K562 (cell line): ENCODE measurements at regions of chr1 and their contacts with region 1.

Region 1: DNA sequence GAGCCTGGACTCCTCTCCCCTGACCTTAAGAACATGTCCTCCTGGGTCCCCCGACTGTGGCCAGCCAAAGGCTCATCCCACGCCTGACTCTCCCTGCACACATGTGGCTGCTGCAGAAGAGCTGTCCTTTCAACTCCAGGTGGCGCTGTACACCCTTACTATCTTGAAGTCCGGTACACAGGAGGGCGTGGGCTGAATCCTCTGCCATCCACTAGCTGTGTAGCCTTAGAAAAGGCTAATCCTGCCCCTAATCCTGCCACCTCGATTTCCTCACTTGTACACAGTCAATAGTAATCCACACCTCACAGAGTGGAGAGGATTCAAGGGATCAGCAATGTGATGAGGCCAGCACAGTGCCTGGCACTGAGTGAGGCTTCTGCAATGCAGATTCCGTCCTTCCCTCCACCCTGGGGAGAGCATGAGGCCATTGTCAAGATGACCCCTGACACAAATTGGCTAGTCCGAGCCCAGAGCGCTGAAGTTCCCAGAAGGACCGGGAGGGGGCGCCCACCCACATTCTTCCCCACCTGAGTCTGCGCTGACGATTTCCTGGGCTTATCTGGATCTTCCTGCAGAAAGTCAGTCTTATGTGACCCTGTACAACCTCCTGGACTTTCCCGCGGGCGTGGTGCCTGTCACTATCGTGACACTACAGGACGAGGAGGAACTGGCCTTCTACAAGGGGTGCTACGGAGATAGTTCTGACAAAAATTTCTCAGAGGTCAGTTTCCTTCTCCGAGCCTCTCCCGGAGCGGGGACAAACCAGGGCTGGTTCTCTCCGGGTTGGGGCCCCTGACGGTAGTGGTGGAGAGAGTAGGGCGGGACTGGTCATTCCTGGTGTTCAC is 47.1 kb upstream of the DMBX1 start:
- DNase-seq: peak; percentile 93 to 98 (median 94)
- ATAC-seq: peak; percentile 93
- H3K4me3 ChIP-seq: peak overlapping the region; percentile 28
- H3K27ac ChIP-seq: peak overlapping the region; percentile 82
- H3K4me1 ChIP-seq: peaks cover 23 to 32% of the 10 kb centered on the region in 2 experiments
- H3K27me3 ChIP-seq: no peaks in the 10 kb centered on the region
- CTCF ChIP-seq: peak; percentile 92 to 99 (median 97)
- EP300 ChIP-seq: peak; percentile 86
- POLR2A ChIP-seq: peak; percentile 37; the same call in 1 of the 2 replicates
- RAD21 ChIP-seq: peak; percentile 66 to 79

Region 2: DNA sequence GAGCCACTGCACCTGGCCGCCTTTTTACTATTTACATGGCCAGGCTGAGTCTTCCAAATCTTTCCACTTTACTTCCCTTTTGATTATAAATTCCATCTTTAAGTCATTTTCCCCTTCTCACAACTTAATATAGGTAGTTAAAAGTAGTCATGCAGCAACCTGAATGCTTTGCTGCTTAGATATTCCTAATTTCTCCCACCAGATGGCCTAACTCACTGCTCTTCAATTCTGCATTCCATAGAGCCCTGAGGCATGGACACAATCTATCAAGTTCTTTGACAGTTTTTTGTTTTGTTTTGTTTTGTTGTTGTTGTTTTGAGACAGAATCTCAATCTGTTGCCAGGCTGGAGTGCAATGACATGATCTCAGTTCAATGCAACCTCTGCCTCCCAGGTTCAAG is 70.1 kb before region 1 on chr1:
- CTCF ChIA-PET with region 1: no interaction called
- POLR2A ChIA-PET with region 1: no interaction called
- in situ Hi-C with region 1: no loop called
- intact Hi-C with region 1: no loop called
- DNase-seq: no peak
- ATAC-seq: no peak
- H3K4me3 ChIP-seq: no peak overlapping the region
- H3K27ac ChIP-seq: no peak overlapping the region
- H3K4me1 ChIP-seq: peaks cover 3 to 22% of the 10 kb centered on the region in 2 experiments; a peak in 3 of 5 replicates
- H3K27me3 ChIP-seq: no peaks in the 10 kb centered on the region
- CTCF ChIP-seq: peak in 1 of 3 experiments; percentile 9; a peak in 1 of 6 replicates
- EP300 ChIP-seq: no peak
- POLR2A ChIP-seq: no peak
- RAD21 ChIP-seq: no peak

Region 3: DNA sequence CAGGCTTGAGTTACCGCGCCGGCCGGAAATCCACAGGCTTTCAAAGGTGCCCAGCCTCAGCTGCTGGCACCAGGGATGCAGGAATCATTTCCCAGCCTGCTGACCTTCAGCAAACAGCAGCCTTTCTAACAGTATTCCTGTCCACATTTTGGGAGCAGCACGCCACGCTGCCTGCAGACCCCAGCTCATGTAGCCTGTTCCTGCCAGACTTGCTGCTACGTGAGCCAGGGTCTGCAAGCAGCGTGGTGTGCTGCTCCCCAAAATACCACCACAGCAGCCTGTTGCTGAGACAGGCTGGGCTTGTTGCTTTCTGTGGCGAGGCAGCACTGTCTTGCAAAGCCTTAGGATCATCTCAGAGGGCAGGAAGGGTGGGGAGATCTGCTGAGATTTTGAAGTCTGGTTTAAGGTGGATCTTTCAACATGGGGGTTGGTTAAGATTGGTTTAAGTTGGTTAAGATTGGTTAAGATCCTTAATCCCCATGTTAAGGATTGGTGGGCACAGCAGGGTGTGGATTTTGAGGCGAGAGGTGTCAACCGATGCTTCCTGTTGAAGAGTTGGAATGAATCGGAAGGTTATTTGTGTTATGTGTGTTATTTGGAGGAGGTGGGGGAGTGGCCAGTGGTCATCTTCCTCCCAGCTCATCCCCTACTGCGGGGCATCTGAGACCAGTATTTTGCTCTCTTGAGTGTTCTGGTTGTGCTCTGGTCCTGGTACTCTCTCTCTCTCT is 35.5 kb before region 1 on chr1:
- CTCF ChIA-PET with region 1: interaction called, 4 read pairs
- POLR2A ChIA-PET with region 1: interaction called, 3 read pairs
- in situ Hi-C with region 1: no loop called
- intact Hi-C with region 1: loop called (anchors 1 kb)
- DNase-seq: no peak
- ATAC-seq: no peak
- H3K4me3 ChIP-seq: no peak overlapping the region
- H3K27ac ChIP-seq: no peak overlapping the region
- H3K4me1 ChIP-seq: peaks cover 24 to 51% of the 10 kb centered on the region in 2 experiments; a peak in 4 of 5 replicates
- H3K27me3 ChIP-seq: no peaks in the 10 kb centered on the region
- CTCF ChIP-seq: no peak
- EP300 ChIP-seq: no peak
- POLR2A ChIP-seq: no peak
- RAD21 ChIP-seq: no peak

Region 4: DNA sequence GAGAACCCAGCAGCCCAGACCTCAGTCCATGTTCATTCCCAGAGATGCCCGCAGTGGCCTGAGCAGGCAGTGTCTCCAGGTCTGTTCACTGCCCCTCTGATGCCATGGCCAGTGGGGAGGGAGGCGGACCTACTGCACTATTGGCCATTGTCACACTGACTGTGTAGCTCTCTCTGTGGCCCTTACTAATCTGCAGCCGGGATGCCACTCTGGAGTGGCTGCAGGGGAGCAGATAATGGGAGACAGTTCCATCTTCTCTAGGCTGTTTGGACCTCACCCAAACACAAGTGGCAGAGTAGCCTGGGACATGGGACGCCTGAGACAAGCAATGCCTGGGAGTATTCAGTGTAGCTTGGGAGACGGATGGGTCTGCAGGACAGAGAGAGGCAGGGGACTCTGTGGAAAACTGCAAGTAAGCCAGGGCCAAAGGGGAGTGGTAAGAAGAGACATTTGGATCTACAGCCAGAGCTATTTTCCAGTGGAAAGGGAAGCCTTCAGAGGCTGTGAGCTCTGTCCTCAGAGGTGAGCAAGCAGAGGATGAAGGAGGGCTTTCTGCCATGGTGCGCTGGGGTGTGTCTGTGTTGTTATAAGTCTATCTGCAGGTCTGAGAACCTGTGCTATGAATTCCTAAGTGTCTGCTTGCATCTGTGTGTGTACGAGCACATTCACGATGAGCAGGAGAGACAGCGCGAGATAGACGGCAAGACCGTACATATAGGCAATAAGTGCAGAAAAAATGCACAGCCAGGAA is 73.8 kb after region 1 on chr1:
- CTCF ChIA-PET with region 1: no interaction called
- POLR2A ChIA-PET with region 1: no interaction called
- in situ Hi-C with region 1: no loop called
- intact Hi-C with region 1: no loop called
- DNase-seq: no peak
- ATAC-seq: peak; percentile 1; the same call in 1 of the 3 replicates
- H3K4me3 ChIP-seq: no peak overlapping the region
- H3K27ac ChIP-seq: no peak overlapping the region
- H3K4me1 ChIP-seq: peaks cover 50 to 71% of the 10 kb centered on the region in 2 experiments
- H3K27me3 ChIP-seq: no peaks in the 10 kb centered on the region
- CTCF ChIP-seq: no peak
- EP300 ChIP-seq: no peak
- POLR2A ChIP-seq: no peak
- RAD21 ChIP-seq: no peak

Region 5: GRCh38 chr1:46527474-46528296 is 85.1 kb after region 1 on chr1:
- CTCF ChIA-PET with region 1: interaction called, 144 read pairs
- POLR2A ChIA-PET with region 1: interaction called, 7 read pairs
- in situ Hi-C with region 1: loop called (anchors 5 kb)
- intact Hi-C with region 1: loop called (anchors 1 kb)
- DNase-seq: peak; percentile 87 to 94 (median 89)
- ATAC-seq: peak; percentile 87
- H3K4me3 ChIP-seq: no peak overlapping the region
- H3K27ac ChIP-seq: no peak overlapping the region; the same call in 2 of the 3 replicates
- H3K4me1 ChIP-seq: peaks cover 47 to 50% of the 10 kb centered on the region in 2 experiments
- H3K27me3 ChIP-seq: no peaks in the 10 kb centered on the region
- CTCF ChIP-seq: peak; percentile 98 to 99 (median 99)
- EP300 ChIP-seq: peak; percentile 50; the same call in 1 of the 2 replicates
- POLR2A ChIP-seq: no peak
- RAD21 ChIP-seq: peak; percentile 100

Region 6: DNA sequence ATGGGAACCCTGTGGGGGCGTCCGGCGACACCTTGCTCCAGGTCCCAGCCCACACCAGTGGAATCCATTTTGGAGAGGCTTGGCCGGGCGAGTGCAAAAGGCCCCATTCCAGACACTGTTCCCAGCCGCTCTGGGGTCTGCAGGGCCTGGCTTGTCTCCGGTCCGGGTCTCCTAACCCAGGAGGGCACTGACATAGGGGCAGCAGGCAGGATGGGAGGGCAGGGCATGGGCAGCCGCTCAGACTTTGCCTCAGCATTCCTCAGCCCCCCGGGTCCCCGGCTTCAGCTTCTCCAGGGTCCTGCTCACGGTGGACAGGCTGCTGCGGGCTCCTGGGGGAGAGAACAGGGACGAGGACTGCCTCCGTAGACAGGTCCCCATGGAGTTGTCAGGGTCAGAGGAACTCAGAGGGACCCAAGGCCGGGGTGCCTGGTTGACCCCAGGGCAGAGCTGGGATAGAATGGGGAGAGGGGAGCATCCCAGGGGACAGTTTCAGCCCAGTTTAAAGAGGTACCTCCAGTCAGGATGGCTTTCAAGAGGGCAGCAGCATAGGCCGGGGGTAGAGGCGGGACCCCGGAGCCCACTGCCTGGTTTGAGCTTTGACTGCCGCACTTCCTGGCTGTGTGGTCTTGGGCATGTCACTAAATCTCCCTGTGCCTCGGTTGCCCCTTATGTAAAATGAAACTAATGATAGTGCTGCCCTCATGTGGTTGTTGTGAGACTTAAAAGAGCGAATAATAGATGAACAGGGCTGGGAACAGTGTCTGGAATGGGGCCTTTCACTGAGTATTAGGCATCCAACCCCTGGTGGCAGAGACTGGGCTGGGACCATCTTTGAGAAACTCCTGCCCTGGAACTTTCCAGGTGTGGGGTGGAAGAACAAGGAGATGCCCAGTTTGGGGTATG is 105.2 kb after region 1 on chr1:
- CTCF ChIA-PET with region 1: interaction called, 9 read pairs
- POLR2A ChIA-PET with region 1: interaction called, 3 read pairs
- in situ Hi-C with region 1: no loop called
- intact Hi-C with region 1: loop called (anchors 1 kb)
- DNase-seq: peak; percentile 48 to 84 (median 52)
- ATAC-seq: peak; percentile 63
- H3K4me3 ChIP-seq: no peak overlapping the region
- H3K27ac ChIP-seq: no peak overlapping the region
- H3K4me1 ChIP-seq: peaks cover 33 to 60% of the 10 kb centered on the region in 2 experiments
- H3K27me3 ChIP-seq: peaks cover 12 to 26% of the 10 kb centered on the region in 2 experiments; a peak in 3 of 5 replicates
- CTCF ChIP-seq: peak; percentile 68 to 83 (median 83)
- EP300 ChIP-seq: no peak
- POLR2A ChIP-seq: no peak
- RAD21 ChIP-seq: peak; percentile 58 to 84

Region 7: DNA sequence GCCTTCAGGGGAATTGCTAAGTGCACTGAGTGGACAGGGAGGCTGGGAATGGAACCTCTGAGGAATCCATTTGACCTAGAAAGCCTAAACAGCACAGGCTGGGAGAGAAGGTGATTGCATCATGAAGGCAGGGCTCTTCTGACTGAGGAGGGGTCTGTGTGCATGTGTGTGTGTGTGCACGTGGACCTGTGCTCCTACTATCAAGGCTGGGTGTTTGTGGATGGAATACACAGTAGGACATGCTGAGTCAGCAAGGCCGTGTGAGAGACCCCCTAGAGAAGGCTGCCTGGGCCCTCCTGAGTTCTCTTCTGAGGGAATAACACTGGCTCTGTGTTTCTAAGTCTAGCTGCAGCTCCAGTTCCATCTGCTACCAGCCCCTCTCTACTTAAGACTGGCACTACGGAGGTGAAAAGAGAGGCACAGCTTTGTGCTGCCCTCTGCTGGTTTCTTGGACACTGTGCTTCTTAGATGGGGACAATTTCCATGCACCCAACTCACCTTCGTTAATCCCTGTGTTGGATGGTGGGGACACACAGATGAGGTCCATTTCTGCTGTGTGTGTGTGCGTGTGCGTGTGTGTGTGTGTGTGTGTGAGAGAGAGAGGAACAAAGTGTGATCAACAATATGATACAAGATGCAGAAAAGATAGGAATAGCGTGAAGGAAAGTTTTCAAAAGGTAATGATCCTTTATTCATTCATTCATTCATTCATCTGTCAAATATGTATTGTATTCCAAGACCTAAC is 282.6 kb after region 1 on chr1:
- CTCF ChIA-PET with region 1: interaction called, 3 read pairs
- POLR2A ChIA-PET with region 1: no interaction called
- in situ Hi-C with region 1: loop called (anchors 5 kb)
- intact Hi-C with region 1: no loop called
- DNase-seq: peak; percentile 56 to 89 (median 66)
- ATAC-seq: peak; percentile 96
- H3K4me3 ChIP-seq: no peak overlapping the region
- H3K27ac ChIP-seq: no peak overlapping the region
- H3K4me1 ChIP-seq: peaks cover 8 to 15% of the 10 kb centered on the region in 2 experiments; a peak in 4 of 5 replicates
- H3K27me3 ChIP-seq: no peaks in the 10 kb centered on the region
- CTCF ChIP-seq: peak; percentile 93 to 96 (median 95)
- EP300 ChIP-seq: no peak
- POLR2A ChIP-seq: no peak
- RAD21 ChIP-seq: peak; percentile 94 to 98